Dorsolateral prefrontal cortex (tissue), 120 donors: ENCODE measurements at regions of chr6 and their contacts with region 1.

Region 1: DNA sequence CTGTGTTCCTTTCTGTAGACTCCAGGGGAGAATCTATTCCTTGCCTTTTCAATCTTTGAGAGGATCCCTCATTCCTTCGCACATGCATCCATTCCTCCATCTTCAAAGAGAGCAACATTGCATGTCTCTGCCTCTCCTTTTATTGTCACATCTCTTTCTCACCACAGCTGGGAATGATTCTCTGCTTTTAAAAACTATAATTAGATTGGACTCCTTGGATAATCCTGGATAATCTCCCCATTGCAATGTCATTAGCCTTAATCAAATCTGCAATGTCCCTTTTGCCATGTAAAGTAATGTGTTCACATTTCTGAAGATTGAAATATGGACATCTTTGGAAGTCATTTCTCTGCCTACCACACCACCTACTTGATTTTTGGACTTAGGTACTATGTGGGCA is 750.1 kb downstream of the COL12A1 start:
- DNase-seq: no peak
- H3K4me3 ChIP-seq: no peak overlapping the region
- H3K27ac ChIP-seq: no peak overlapping the region
- H3K27me3 ChIP-seq: peaks cover 0 to 4% (median 0%) of the 10 kb centered on the region in 45 donors
- CTCF ChIP-seq: no peak

Region 2: GRCh38 chr6:74467533-74468215 is 11.9 kb after region 1 on chr6:
- intact Hi-C with region 1: loop called in 1 of 2 experiments (anchors 2 kb)
- DNase-seq: no peak
- H3K4me3 ChIP-seq: no peak overlapping the region
- H3K27ac ChIP-seq: no peak overlapping the region
- H3K27me3 ChIP-seq: no peaks in the 10 kb centered on the region
- CTCF ChIP-seq: no peak